ENCODE measurements at regions of chr5 and their contacts with region 1.

Region 1: DNA sequence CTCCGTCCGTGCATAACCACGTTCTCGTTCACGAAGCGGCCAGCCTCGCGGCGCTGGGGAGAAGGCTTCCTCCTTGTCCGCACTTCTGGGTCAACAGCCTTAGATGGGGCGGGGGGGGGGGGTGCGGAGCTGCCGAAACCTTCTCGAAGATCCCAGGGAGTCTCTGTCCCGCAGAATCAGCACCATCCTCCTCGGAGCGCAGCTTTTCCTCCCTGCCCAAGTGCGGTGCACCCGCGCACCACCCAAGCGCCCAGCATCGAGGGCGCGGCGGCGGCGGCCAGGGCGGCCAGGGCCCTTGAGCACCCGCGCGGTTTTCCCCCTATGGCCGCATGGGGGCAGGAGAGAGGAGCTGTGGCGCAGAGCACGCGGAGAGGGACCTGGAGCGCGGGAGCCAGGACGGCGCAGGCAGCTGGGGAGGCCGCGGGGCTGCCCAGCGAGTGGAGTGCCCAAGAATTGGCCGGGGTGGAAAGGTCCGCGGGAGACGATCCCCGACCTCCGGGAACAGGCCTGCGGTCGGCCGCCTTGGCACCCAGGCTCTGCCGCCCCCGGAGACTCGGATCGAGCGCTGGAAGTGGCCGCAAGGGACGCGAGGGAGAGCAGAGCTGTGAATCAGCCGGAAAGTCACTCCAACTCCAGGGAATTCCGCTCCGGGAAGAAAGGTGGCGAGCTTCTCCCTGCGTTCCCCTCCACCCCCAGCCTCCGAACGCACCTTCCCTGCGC is 43.1 kb downstream of the TMEM174 start:
- DNase-seq: peak; percentile 82
- H3K4me3 ChIP-seq: peak overlapping the region; percentile 9 to 37 (median 28)
- H3K27ac ChIP-seq: no peak overlapping the region
- H3K4me1 ChIP-seq: peaks cover 4% of the 10 kb centered on the region
- H3K27me3 ChIP-seq: peaks cover 49 to 67% of the 10 kb centered on the region in 2 experiments
- CTCF ChIP-seq: peak; percentile 83 to 85
- POLR2A ChIP-seq: no peak

Region 2: DNA sequence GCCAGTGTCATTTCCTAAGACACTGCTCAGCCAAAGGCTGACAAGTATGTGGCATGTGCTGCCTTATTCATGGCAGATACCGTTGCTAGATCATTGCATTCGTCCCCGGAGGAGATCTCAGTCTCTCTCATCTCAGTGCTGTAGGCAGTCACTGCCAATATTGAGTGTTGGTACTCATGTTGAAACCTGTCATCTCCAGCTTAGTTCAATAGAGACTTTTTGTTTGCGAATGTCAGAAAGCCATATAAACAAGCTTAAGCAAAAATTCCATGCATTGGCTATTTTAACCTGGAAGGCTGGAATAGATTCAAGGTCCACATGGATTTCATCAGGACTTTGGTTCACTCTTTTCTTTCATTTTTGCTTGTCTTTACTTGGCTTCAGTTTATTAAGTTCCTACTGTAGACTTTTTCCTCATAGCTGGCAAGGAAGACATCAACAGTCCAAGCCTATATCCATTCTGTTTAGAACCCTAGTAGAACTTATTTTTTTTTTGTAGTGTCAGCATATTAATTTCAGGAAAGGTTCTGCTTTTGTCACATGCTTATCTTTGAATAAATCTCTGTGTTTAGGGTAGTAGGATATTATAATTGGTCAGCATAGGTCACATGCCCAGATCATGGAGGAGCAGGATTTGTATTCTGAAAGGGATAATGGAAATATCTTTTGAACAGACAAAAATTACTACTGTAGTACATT is 193.4 kb before region 1 on chr5:
- CTCF ChIA-PET with region 1: no interaction called
- POLR2A ChIA-PET with region 1: no interaction called
- dilution Hi-C with region 1: no loop called
- intact Hi-C with region 1: no loop called
- DNase-seq: no peak
- H3K4me3 ChIP-seq: no peak overlapping the region
- H3K27ac ChIP-seq: no peak overlapping the region
- H3K4me1 ChIP-seq: no peaks in the 10 kb centered on the region
- H3K27me3 ChIP-seq: no peaks in the 10 kb centered on the region
- CTCF ChIP-seq: no peak
- POLR2A ChIP-seq: no peak

Region 3: GRCh38 chr5:73093943-73094342 is 122.1 kb before region 1 on chr5:
- CTCF ChIA-PET with region 1: interaction called, 14 read pairs
- POLR2A ChIA-PET with region 1: no interaction called
- dilution Hi-C with region 1: no loop called
- intact Hi-C with region 1: no loop called
- DNase-seq: peak; percentile 8
- H3K4me3 ChIP-seq: no peak overlapping the region
- H3K27ac ChIP-seq: no peak overlapping the region
- H3K4me1 ChIP-seq: no peaks in the 10 kb centered on the region
- H3K27me3 ChIP-seq: no peaks in the 10 kb centered on the region
- CTCF ChIP-seq: no peak
- POLR2A ChIP-seq: no peak

Region 4: DNA sequence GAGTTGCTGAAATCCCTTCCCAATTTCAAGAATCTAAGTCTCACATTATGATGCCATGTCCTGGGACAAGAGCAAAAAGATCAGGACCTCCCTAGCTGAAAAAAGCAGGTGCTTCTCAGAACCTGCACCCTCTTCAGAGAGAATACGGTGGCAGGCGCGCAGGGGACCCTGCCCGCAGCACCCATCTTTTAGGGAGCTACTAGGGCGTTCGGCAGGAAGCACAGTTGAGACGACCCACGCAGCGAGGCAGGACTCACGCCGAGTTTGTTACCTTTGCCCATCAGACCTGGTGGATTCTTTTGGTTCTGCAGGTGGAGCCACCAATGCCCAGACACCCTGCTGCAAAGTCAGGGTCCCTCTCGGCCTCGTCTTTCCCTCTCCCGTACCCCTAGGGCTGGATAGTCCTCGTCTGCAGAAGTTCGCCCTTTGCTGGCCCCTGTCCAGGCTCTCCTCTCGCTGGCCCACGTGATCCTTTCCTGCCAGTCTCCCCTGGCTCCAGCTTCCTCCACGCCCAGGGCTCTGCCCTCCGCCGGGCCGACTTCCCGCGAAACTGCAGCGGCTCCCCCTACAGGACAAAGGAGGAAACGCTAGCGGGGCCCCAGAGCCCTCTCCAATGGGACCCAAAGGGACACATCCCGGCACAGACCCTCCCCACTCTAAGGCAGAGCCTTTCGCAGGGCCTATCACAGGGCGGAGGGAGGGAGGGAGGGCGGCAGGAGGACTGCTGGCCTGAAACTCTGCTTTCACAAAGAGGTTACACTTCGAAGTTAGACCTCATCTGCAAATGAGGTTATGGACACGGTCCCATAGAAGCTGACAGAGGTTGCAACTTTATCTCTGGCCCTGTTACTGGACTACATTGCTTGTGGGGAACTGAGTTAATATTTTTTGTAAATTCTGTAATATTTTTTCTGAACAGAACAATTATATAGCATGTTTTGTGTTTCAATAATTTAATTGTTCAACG is 14.2 kb before region 1 on chr5:
- CTCF ChIA-PET with region 1: interaction called, 59 read pairs
- POLR2A ChIA-PET with region 1: no interaction called
- dilution Hi-C with region 1: no loop called
- intact Hi-C with region 1: no loop called
- DNase-seq: peak; percentile 60
- H3K4me3 ChIP-seq: no peak overlapping the region
- H3K27ac ChIP-seq: no peak overlapping the region
- H3K4me1 ChIP-seq: no peaks in the 10 kb centered on the region
- H3K27me3 ChIP-seq: peaks cover 29 to 30% of the 10 kb centered on the region in 2 experiments
- CTCF ChIP-seq: peak; percentile 78 to 91
- POLR2A ChIP-seq: no peak

Region 5: DNA sequence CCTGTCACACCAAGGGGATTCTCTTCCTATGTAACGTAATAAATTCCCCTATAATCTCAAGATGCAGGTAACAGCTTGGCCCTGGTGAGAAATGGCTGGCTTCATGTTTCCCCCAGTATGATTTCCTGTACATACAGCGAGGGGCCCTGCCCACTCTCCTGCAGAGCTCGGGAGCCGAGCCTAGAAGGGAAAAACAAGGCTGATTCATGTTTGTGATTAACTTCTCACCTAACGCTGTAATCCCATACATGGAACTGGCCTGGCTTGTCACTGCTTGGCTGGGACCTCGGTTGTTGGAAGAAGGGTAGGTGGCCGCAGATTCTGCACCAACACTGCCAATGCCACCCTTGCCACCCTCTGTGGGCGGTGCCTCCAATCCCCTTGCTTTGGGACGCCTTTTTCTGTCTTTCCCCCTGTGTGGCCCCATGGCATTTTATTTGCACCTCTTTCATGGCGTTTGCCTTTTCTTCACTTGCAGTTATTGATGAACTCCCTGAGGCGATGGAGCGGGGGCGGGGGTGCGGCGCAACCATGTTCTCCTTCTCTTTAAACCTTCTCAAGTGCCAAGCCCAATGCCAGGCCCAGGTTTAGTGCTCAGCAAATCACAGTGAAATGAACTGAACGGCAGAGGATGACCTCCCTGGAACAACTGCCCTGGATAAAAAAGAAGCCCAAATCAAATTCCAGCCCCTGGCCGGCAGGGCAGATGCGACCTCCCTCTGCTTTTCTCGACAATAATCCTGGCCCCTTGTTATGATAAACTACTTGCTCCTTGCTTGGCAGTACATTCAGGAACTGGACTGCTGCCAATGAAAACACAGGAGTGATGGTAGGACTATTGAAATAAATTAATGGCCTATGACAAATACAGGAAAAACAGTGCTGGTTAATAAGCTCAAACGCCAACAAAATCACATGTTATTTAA is 65.0 kb after region 1 on chr5:
- CTCF ChIA-PET with region 1: interaction called, 11 read pairs
- POLR2A ChIA-PET with region 1: no interaction called
- dilution Hi-C with region 1: no loop called
- intact Hi-C with region 1: loop called (anchors 5 kb)
- DNase-seq: peak; percentile 99
- H3K4me3 ChIP-seq: peak overlapping the region in 1 of 3 experiments; percentile 12
- H3K27ac ChIP-seq: peak overlapping the region; percentile 30
- H3K4me1 ChIP-seq: peaks cover 17% of the 10 kb centered on the region
- H3K27me3 ChIP-seq: peaks cover 30 to 40% of the 10 kb centered on the region in 2 experiments
- CTCF ChIP-seq: no peak
- POLR2A ChIP-seq: no peak

Region 6: GRCh38 chr5:73321757-73322436 is 105.8 kb after region 1 on chr5:
- CTCF ChIA-PET with region 1: interaction called, 10 read pairs
- POLR2A ChIA-PET with region 1: no interaction called
- dilution Hi-C with region 1: no loop called
- intact Hi-C with region 1: no loop called
- DNase-seq: no peak
- H3K4me3 ChIP-seq: no peak overlapping the region
- H3K27ac ChIP-seq: no peak overlapping the region
- H3K4me1 ChIP-seq: no peaks in the 10 kb centered on the region
- H3K27me3 ChIP-seq: peaks cover 49 to 58% of the 10 kb centered on the region in 2 experiments
- CTCF ChIP-seq: no peak
- POLR2A ChIP-seq: no peak

Region 7: GRCh38 chr5:73448463-73449136 is 232.5 kb after region 1 on chr5 and contains the start of gene FOXD1:
- CTCF ChIA-PET with region 1: interaction called, 277 read pairs
- POLR2A ChIA-PET with region 1: interaction called, 3 read pairs
- dilution Hi-C with region 1: no loop called
- intact Hi-C with region 1: loop called (anchors 1 kb)
- DNase-seq: peak; percentile 66
- H3K4me3 ChIP-seq: peak within 1 kb of the TSS in 1 of 3 experiments; percentile 38
- H3K27ac ChIP-seq: no peak within 1 kb of the TSS
- H3K4me1 ChIP-seq: peaks cover 7% of the 10 kb centered on the region
- H3K27me3 ChIP-seq: peaks cover 68 to 88% of the 10 kb centered on the region in 2 experiments
- CTCF ChIP-seq: no peak
- POLR2A ChIP-seq: no peak
- total RNA-seq, gene FOXD1: 0.14 and 0.20 TPM in 2 replicates

Region 8: GRCh38 chr5:73540192-73540591 is 324.1 kb after region 1 on chr5:
- CTCF ChIA-PET with region 1: interaction called, 11 read pairs
- POLR2A ChIA-PET with region 1: no interaction called
- dilution Hi-C with region 1: no loop called
- intact Hi-C with region 1: no loop called
- DNase-seq: peak; percentile 38
- H3K4me3 ChIP-seq: no peak overlapping the region
- H3K27ac ChIP-seq: no peak overlapping the region
- H3K4me1 ChIP-seq: peaks cover 27% of the 10 kb centered on the region
- H3K27me3 ChIP-seq: no peaks in the 10 kb centered on the region
- CTCF ChIP-seq: no peak
- POLR2A ChIP-seq: no peak